Transverse colon (tissue), 4 donors: ENCODE measurements at regions of chr15 and their contacts with region 1.

Region 1: DNA sequence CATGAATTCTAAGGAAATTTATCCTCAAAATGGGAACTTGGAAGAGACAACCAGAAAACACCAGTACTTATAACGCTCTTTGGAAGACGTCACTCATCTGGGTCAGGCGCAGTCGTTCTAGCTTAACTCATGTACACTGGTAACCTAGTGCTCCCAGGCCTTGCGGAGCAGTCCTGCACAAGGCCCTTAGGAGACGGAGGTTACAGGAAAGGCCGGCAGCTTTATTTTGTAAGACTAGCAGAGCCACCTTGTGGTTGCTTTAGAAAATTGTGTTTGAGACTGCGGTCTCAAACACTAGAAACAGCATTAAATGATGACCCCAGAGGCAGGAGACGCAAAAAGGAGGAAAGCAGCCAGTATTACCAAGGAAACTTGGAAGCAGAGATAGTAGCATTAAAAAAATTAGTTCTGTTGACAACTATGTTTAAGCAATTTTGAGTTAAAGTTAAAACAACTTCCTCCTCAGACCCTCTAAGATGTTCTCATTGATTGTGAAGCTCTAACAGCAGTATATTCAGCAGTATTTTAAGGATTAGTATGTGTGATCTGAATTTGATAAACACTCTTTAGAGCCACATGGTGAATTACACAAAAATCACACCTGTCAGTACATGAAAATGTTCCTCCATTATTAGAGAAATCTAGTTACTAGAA is 141.9 kb upstream of the C2CD4B start:
- DNase-seq: peak; percentile 44
- H3K4me3 ChIP-seq: no peak overlapping the region
- H3K27ac ChIP-seq: no peak overlapping the region
- H3K4me1 ChIP-seq: peaks cover 0 to 9% (median 1%) of the 10 kb centered on the region in 4 donors
- H3K27me3 ChIP-seq: no peaks in the 10 kb centered on the region
- CTCF ChIP-seq: peak; percentile 56 to 70 (median 68)
- EP300 ChIP-seq: no peak
- POLR2A ChIP-seq: no peak

Region 2: DNA sequence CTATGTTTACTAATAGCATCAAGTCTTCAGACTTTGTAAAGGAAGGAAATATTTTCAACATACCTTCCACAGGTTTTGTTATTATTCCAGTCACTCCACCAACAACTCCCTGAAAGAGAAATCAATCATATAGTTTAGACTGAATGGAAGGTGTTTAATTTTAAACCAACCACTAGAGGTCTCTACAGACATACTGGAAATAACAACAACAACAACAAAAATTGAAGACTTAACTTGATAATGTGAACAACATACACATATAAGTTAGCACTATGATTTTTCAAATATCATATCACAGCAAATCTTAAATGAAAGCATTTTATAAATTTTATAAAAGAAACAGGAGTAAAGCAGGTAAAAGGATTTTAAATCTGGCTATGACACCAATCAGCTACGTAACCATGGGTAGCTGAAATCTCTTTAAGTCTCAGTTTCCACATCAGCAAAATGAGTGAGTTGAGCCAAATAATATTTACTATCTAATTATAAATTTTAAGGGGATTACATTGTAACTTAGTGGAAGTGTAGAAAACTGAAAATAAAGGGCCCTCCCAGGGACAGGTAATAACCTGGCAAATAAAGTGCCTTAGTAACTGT is 435.0 kb before region 1 on chr15:
- in situ Hi-C with region 1: loop called in 1 of 4 experiments (anchors 25 kb)
- intact Hi-C with region 1: no loop called
- DNase-seq: no peak
- H3K4me3 ChIP-seq: no peak overlapping the region
- H3K27ac ChIP-seq: no peak overlapping the region
- H3K4me1 ChIP-seq: no peaks in the 10 kb centered on the region
- H3K27me3 ChIP-seq: no peaks in the 10 kb centered on the region
- CTCF ChIP-seq: peak; percentile 26 to 50 (median 45)
- EP300 ChIP-seq: no peak
- POLR2A ChIP-seq: no peak

Region 3: GRCh38 chr15:62071711-62072308 is 235.2 kb before region 1 on chr15:
- in situ Hi-C with region 1: no loop called
- intact Hi-C with region 1: loop called (anchors 10 kb)
- DNase-seq: no peak
- H3K4me3 ChIP-seq: no peak overlapping the region
- H3K27ac ChIP-seq: no peak overlapping the region
- H3K4me1 ChIP-seq: peaks cover 0 to 19% (median 14%) of the 10 kb centered on the region in 4 donors
- H3K27me3 ChIP-seq: peaks cover 10% of the 10 kb centered on the region
- CTCF ChIP-seq: peak; percentile 48 to 77 (median 68)
- EP300 ChIP-seq: no peak
- POLR2A ChIP-seq: no peak

Region 4: GRCh38 chr15:62183130-62183529 is 123.8 kb before region 1 on chr15:
- in situ Hi-C with region 1: no loop called
- intact Hi-C with region 1: no loop called
- DNase-seq: no peak
- H3K4me3 ChIP-seq: no peak overlapping the region
- H3K27ac ChIP-seq: no peak overlapping the region
- H3K4me1 ChIP-seq: no peaks in the 10 kb centered on the region
- H3K27me3 ChIP-seq: peaks cover 5% of the 10 kb centered on the region
- CTCF ChIP-seq: no peak
- EP300 ChIP-seq: no peak
- POLR2A ChIP-seq: no peak